Mammary epithelial cell (primary cell): ENCODE measurements at regions of chr1 and their contacts with region 1.

Region 1: DNA sequence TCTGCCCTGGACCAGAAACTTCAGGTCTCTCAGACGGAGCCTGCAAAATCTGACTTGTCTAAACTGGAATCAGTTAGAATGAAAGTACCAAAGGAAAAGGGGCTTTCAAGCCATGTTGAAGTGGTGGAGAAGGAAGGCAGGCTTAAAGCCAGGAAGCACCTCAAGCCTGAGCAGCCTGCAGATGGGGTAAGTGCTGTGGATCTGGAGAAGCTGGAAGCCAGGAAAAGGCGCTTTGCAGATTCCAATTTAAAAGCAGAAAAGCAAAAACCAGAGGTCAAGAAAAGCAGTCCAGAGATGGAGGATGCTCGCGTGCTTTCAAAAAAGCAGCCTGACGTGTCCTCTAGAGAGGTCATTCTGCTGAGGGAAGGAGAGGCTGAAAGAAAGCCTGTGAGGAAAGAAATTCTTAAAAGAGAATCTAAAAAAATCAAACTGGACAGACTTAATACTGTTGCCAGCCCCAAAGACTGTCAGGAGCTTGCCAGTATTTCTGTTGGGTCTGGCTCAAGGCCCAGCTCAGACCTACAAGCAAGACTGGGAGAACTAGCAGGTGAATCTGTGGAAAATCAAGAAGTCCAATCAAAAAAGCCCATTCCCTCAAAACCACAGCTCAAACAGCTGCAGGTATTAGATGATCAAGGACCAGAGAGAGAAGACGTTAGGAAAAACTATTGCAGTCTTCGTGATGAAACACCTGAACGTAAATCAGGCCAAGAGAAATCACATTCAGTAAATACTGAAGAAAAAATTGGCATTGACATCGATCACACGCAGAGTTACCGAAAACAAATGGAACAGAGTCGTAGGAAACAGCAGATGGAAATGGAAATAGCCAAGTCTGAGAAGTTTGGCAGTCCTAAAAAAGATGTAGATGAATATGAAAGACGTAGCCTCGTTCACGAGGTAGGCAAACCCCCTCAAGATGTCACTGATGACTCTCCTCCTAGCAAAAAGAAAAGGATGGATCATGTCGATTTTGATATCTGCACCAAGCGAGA is 46.6 kb downstream of the ZBTB17 start:
- DNase-seq: no peak
- H3K4me3 ChIP-seq: no peak overlapping the region
- H3K27ac ChIP-seq: no peak overlapping the region
- H3K4me1 ChIP-seq: peaks cover 11% of the 10 kb centered on the region
- H3K27me3 ChIP-seq: no peaks in the 10 kb centered on the region
- CTCF ChIP-seq: no peak

Region 2: DNA sequence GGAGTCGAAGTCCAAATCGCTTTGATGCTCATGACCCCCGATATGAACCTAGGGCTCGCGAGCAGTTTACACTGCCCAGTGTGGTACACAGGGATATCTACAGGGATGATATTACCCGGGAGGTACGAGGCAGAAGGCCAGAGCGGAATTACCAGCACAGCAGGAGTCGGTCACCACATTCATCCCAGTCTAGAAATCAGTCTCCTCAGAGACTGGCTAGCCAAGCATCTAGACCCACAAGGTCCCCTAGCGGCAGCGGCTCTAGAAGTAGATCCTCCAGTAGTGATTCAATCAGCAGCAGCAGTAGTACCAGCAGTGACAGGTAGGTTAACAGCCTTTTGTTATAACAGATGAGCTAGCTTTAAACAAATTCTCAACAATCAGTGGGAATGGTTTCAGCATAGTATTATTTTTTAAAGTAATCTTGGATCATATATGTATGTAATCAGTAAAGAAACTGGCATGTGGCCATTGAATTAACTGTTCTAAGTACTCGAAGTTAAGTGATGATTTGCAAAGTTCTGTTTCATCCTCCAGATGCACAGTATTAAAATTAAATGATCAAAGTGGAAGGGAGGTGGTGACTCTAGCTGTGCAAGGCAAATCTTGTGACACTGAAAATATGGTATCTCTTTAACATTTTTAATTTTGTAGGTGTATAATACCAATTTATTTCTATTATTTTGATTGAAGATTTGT is 52.8 kb before region 1 on chr1:
- CTCF ChIA-PET with region 1: no interaction called
- dilution Hi-C with region 1: loop called (anchors 5 kb)
- in situ Hi-C with region 1: no loop called
- intact Hi-C with region 1: no loop called
- DNase-seq: no peak
- H3K4me3 ChIP-seq: no peak overlapping the region
- H3K27ac ChIP-seq: no peak overlapping the region
- H3K4me1 ChIP-seq: no peaks in the 10 kb centered on the region
- H3K27me3 ChIP-seq: no peaks in the 10 kb centered on the region
- CTCF ChIP-seq: peak; percentile 28

Region 3: GRCh38 chr1:16009030-16009709 is 79.9 kb after region 1 on chr1:
- CTCF ChIA-PET with region 1: no interaction called
- dilution Hi-C with region 1: no loop called
- in situ Hi-C with region 1: no loop called
- intact Hi-C with region 1: no loop called
- DNase-seq: peak; percentile 37
- H3K4me3 ChIP-seq: no peak overlapping the region
- H3K27ac ChIP-seq: no peak overlapping the region
- H3K4me1 ChIP-seq: peaks cover 19% of the 10 kb centered on the region
- H3K27me3 ChIP-seq: no peaks in the 10 kb centered on the region
- CTCF ChIP-seq: peak; percentile 92 to 97